A673 (cell line): ENCODE measurements at regions of chr12 and their contacts with region 1.

Region 1: DNA sequence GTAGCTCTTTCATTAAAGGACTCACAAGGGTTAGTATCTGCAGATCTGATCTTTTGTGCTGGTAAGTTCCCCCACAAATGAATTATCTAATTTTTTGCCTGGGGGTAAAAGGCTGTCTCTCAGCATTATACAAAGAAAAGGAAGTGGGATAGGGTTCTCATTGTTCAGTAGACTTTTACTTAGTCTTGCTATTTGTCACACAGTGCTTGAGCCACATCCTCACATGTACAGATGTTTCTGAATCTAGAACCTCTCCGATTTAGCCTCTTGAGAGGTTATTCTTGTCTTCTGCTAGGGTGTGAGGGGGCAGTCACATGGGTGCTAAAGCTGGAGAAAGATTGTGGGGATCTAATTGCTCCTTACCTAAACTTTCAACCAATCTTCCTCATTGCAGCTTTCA is 93.0 kb downstream of the SLC41A2 start:
- DNase-seq: no peak
- H3K4me3 ChIP-seq: no peak overlapping the region
- H3K27ac ChIP-seq: no peak overlapping the region
- H3K4me1 ChIP-seq: no peaks in the 10 kb centered on the region
- H3K27me3 ChIP-seq: peaks cover 5% of the 10 kb centered on the region
- CTCF ChIP-seq: no peak

Region 2: DNA sequence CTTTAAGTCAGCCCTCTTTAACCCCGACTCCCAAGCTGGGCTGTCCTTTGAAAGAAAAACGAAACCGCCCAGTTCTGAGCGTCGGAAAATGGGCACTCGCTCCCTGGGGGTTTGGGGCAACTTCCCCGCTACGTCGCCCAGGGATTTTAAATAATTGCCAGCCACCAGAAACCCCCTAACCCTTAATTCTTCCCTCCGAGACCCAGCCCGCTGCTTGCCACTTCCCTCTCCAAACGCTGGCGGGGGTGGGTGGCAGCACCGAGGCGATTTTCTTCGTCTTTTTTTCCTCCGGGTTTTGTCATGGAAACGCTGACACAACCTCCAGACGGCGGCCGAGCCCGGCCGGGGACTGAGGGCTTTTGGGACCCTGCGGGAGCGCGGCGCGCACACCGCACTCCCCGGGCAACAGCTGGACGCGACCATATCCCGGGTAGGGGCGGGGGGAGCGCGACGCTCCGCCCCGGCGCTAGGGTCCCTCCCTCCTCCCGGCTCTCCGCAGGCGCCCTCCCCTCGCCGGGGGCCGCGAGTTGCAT is 408.6 kb before region 1 on chr12 and contains the start of gene CHST11:
- CTCF ChIA-PET with region 1: no interaction called
- POLR2A ChIA-PET with region 1: no interaction called
- intact Hi-C with region 1: loop called (anchors 10 kb)
- DNase-seq: peak; percentile 80
- H3K4me3 ChIP-seq: peak within 1 kb of the TSS; percentile 61
- H3K27ac ChIP-seq: no peak within 1 kb of the TSS
- H3K4me1 ChIP-seq: peaks cover 4% of the 10 kb centered on the region
- H3K27me3 ChIP-seq: peaks cover 41% of the 10 kb centered on the region
- CTCF ChIP-seq: peak; percentile 28; the same call in 1 of the 2 replicates
- total RNA-seq, gene CHST11: 1.1 and 1.5 TPM in 2 replicates

Region 3: GRCh38 chr12:105562199-105562971 is 697.3 kb after region 1 on chr12:
- CTCF ChIA-PET with region 1: no interaction called
- POLR2A ChIA-PET with region 1: no interaction called
- intact Hi-C with region 1: no loop called
- DNase-seq: peak; percentile 39
- H3K4me3 ChIP-seq: no peak overlapping the region
- H3K27ac ChIP-seq: no peak overlapping the region
- H3K4me1 ChIP-seq: no peaks in the 10 kb centered on the region
- H3K27me3 ChIP-seq: no peaks in the 10 kb centered on the region
- CTCF ChIP-seq: no peak